Activated CD8-positive, alpha-beta memory T cell treated with anti-CD3 and anti-CD28 coated beads, Interleukin-2, amount 10 ng/mL, durations not matched to agents 7 days and 5 days (primary cell): ENCODE measurements at regions of chr11 and their contacts with region 1.

Region 1: DNA sequence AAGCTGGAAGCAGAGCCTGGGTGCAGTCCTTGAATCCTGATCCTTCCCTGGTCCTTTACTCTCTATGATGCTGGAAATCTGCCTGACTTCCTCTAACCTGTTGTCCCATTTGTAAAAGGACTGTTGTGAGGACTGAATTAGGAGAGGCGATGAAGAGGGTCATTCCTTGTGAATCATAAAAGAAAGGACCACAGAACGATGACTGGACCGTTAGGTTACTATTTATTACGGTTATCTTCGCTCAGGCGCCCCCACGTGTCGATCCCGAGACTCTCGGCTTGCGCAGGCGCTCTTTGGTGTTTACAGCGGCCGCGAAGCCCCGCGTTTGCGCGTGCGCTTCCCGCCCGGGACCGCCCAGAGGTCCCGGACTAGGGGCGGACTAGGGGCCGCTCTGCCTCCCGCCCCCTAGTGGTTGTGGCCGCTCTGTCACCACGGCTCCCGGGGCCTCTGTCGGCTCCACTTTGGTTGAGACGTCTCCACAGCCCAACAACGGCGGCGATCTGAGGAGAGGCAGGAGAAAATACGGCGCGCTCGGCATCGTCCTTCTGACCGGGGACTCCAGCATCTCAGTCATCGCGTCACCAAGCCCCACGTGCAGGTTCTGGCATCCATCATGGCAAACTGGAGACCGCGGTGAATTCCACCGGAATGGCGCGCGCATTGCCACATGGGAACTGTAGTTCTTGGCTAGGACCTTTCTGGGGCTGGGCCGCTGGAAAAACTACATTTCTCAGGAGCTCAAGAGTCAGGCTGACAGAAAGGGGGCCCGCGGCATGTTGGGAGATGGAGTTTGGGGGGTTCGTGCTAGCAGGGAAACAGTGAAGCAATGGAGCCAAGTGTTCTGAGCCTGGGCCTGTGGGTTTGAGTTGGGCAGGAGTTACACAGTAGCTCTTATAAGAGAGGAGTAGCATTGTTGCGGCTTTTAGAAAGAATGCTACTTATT is at the start of gene STARD10:
- DNase-seq: peak; percentile 96
- ATAC-seq: peak; percentile 97
- H3K4me3 Mint-ChIP-seq: peak within 1 kb of the TSS; percentile 87
- H3K27ac Mint-ChIP-seq: peak within 1 kb of the TSS; percentile 98
- H3K4me1 Mint-ChIP-seq: peaks cover 24% of the 10 kb centered on the region
- H3K27me3 Mint-ChIP-seq: no peaks in the 10 kb centered on the region
- total RNA-seq, gene STARD10: 8.4 to 18.4 TPM

Region 2: DNA sequence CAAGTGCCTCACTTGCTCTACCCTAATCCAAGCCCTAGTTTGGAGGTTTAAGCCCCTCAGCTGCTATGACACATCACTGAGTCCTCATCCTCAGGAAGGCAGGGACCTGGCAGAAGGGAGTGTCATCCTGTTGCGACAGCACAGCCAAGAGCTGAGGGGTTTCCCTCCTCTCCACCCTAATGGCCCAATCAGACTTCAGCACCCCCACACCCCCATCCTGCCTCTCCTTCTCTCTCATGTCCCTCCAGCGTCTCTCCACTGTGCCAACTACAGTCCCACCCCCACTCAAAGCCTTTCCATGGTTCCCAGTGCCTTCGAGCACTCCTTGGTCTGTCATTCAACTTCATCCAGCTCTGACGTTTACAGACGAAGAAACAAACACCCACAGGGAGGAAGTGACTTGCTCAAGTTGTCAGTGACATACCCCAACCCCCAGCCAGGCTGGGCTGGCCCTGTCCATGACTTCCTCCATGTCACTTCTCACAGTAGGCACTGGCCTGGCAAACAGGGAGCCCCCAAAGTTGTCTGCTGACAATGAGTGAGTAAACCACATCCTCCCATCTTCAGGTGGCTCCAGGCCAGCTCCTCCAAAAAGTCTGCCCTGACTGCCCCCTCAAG is 57.1 kb before region 1 on chr11:
- CTCF ChIA-PET with region 1: interaction called, 16 read pairs
- DNase-seq: peak; percentile 88
- ATAC-seq: peak; percentile 87
- H3K4me3 Mint-ChIP-seq: peak overlapping the region; percentile 10
- H3K27ac Mint-ChIP-seq: peak overlapping the region; percentile 94
- H3K4me1 Mint-ChIP-seq: peaks cover 58% of the 10 kb centered on the region
- H3K27me3 Mint-ChIP-seq: no peaks in the 10 kb centered on the region

Region 3: GRCh38 chr11:72781313-72782050 is 12.2 kb before region 1 on chr11:
- CTCF ChIA-PET with region 1: interaction called, 54 read pairs
- DNase-seq: no peak
- ATAC-seq: peak; percentile 80
- H3K4me3 Mint-ChIP-seq: peak overlapping the region; percentile 58
- H3K27ac Mint-ChIP-seq: no peak overlapping the region
- H3K4me1 Mint-ChIP-seq: peaks cover 14% of the 10 kb centered on the region
- H3K27me3 Mint-ChIP-seq: peaks cover 8% of the 10 kb centered on the region

Region 4: GRCh38 chr11:72814286-72815109 is 20.8 kb after region 1 on chr11 and contains the start of gene ATG16L2:
- CTCF ChIA-PET with region 1: interaction called, 61 read pairs
- DNase-seq: peak; percentile 92
- ATAC-seq: peak; percentile 75
- H3K4me3 Mint-ChIP-seq: peak within 1 kb of the TSS; percentile 100
- H3K27ac Mint-ChIP-seq: peak within 1 kb of the TSS; percentile 99
- H3K4me1 Mint-ChIP-seq: peaks cover 52% of the 10 kb centered on the region
- H3K27me3 Mint-ChIP-seq: no peaks in the 10 kb centered on the region
- total RNA-seq, gene ATG16L2: 103 to 168 TPM